Left ventricle myocardium superior (tissue), 1 donor: ENCODE measurements at regions of chr5 and their contacts with region 1.

Region 1: DNA sequence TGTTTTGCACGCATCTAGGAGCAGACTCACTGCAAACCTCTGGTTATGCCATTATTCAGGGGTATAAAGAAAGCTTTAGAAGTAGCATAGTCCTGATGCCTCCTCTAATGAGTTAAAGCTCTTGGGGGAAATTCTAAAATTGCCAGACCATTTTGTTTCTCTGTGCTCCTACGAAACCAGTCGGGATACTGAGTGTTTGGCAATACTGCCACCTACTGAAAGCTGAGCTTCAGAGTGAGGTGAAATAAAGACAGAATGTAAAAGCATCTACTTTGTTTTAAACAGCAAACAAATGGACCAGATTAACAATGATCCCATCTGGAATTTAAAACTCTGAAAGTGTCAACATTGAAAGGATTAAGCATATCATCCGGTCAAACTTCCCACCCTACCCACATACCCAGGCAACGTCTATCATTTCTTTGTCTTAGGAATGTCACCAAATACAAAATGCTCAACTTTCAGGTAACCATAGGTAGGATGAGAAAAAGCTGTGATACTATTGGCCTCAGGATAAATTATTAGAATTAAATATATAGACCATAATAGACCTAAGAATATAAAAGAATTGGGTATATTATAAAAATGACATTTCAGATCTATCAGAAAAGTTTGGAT is 77.8 kb upstream of the SHISAL2B start:
- DNase-seq: no peak
- ATAC-seq: peak; percentile 57

Region 2: DNA sequence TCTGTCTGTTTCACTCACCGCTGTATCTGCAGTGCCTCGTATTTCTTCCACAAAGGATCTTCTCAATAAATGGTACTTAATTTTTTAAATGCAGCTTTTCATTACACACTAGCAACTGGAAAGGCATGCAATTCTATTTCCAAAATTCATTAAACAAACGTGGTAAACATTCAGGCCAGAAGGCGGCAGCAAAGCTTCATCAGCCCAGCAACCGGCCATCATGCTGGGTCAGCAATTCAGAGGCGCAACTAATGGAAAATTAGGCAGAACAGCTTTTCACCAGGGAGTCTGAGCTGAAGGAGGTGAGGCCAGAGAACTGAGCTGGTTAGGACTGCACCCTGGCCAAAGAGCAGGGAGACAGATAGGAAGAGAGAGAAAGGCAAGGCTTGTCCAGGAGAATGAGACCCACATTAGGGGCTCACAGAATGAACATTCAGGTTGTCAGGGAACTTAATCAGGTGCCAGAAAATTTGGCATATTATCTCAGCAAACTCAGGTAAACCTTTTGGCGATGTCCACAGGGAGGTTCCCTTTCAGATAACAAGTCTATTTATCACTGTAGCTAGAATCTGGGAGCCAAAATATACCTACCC is 464.5 kb before region 1 on chr5:
- intact Hi-C with region 1: loop called (anchors 5 kb)
- DNase-seq: peak; percentile 65
- ATAC-seq: peak; percentile 77

Region 3: DNA sequence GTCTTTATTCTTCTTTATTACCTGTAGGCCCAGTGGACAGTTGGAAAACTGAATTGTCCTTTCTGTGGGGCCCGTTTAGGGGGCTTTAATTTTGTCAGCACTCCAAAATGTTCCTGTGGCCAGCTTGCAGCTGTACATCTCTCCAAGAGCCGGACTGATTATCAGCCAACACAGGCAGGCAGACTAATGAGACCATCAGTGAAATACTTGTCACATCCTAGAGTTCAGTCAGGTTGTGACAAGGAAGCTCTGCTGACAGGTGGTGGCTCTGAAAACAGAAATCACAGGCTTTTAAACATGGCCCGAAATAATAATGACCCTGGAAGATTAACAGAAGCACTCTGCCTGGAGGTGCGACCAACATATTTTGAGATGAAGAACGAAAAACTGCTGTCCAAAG is 398.9 kb before region 1 on chr5:
- intact Hi-C with region 1: no loop called
- DNase-seq: no peak
- ATAC-seq: peak; percentile 58

Region 4: GRCh38 chr5:64505769-64506566 is 106.5 kb before region 1 on chr5 and contains the start of gene RGS7BP:
- intact Hi-C with region 1: loop called (anchors 10 kb)
- DNase-seq: peak; percentile 75
- ATAC-seq: peak; percentile 97
- total RNA-seq, gene RGS7BP: 6.4 TPM

Region 5: DNA sequence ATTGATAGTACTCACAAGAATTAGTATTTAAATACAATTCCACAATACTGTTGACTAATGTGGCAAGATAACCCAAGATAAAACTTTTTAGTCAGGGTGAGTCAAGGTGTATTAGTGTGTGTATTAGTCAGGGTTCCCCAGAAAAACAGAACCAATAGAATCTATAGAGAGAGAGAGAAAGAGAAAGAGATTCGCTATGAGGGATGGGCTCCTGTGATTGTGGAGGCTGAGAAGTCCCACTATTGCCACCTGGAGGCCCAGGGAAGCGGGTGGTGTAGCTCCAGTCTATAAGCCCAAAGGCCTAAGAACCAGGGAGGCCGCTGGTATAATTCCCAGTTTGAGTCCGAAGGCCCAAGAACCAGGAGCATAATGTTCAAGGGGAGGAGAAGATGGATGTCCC is 67.8 kb after region 1 on chr5:
- intact Hi-C with region 1: no loop called
- DNase-seq: no peak
- ATAC-seq: no peak

Region 6: DNA sequence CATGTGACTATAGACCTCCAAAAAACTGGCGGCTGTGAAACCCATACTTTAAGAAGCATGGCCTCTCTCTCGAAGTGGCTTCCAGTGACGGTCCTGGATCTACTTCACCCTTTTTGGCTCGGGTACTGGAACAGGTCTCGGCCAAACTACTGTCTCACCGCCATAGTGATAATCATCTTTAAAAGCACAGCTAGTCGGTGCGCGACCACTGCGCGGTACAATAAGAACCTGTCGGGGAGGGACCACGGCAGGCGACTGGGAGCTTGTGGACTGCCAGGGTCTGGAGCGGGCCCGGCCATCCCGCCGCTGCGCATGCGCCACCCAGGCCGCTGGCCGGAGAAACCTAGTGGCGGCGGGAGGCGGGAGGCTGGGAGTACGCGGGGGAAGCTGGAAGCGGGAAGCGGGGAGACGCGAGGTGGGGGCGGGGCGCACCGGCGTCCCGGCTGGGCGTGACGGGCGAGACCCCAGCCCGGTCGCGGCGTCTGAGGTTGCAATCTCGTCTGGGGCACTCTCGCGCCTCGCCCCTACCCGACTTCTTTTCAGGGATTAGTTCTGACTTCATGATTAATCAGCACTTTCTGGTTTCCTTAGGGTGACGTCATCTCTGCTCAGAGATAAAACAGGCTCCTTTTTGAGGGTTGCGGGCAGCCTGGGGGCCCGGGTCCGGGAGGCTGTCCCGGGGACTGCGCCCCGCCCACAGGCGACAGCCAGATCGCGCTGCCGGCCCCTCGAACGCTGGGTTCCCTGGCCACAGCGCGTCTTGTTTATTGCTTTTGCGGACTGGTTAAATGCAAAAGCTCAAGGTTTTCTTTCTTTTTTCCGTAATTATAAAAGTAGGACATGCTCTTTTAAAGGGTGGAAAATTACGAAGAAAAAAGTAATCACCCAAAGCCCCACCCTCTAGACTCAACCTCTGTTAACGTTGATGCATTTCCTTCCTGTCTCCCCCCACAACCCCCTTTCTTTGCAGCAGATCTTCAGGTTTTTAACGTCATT is 423.1 kb after region 1 on chr5:
- intact Hi-C with region 1: no loop called
- DNase-seq: peak; percentile 94
- ATAC-seq: peak; percentile 96